Natural killer cell (primary cell): ENCODE measurements at regions of chr17 and their contacts with region 1.

Region 1: GRCh38 chr17:18855831-18856569 is 1.9 kb upstream of the PRPSAP2 start:
- DNase-seq: peak; percentile 83 to 94
- ATAC-seq: peak; percentile 84 to 91 (median 87)
- H3K4me3 ChIP-seq: peak overlapping the region; percentile 71
- H3K4me3 Mint-ChIP-seq: peak overlapping the region; percentile 98
- H3K27ac ChIP-seq: peak overlapping the region; percentile 72
- H3K27ac Mint-ChIP-seq: peak overlapping the region; percentile 96 to 97
- H3K4me1 ChIP-seq: peaks cover 28% of the 10 kb centered on the region
- H3K4me1 Mint-ChIP-seq: peaks cover 36 to 37% of the 10 kb centered on the region in 2 donors
- H3K27me3 ChIP-seq: no peaks in the 10 kb centered on the region
- H3K27me3 Mint-ChIP-seq: no peaks in the 10 kb centered on the region
- CTCF ChIP-seq: no peak

Region 2: GRCh38 chr17:18896146-18896545 is 40.1 kb after region 1 on chr17:
- intact Hi-C with region 1: loop called (anchors 2 kb)
- DNase-seq: no peak
- ATAC-seq: no peak
- H3K4me3 ChIP-seq: no peak overlapping the region
- H3K4me3 Mint-ChIP-seq: no peak overlapping the region
- H3K27ac ChIP-seq: no peak overlapping the region
- H3K27ac Mint-ChIP-seq: no peak overlapping the region
- H3K4me1 ChIP-seq: peaks cover 18% of the 10 kb centered on the region
- H3K4me1 Mint-ChIP-seq: peaks cover 17 to 19% of the 10 kb centered on the region in 2 donors
- H3K27me3 ChIP-seq: no peaks in the 10 kb centered on the region
- H3K27me3 Mint-ChIP-seq: peaks cover 0 to 8% of the 10 kb centered on the region in 2 donors
- CTCF ChIP-seq: no peak

Region 3: DNA sequence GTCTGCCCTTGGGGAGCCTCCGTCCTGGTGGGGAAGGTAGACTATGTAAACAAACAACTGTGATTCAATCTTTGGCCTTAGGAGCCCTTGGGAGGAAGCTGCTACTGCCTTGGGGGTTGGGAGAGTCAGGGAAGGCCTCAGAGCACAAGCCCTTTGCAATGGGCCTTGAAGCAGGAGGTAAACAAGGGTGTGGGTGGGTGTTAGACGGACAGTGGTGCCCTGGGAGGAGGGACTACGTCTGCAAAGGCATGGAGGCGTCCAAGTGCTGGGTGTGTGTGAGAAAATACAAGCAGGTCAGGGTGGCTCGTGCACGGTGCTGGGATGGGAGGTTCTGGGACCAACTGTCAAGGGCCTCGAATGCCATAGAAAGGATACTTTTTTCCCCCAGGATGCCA is 155.1 kb after region 1 on chr17:
- intact Hi-C with region 1: no loop called
- DNase-seq: no peak
- ATAC-seq: no peak
- H3K4me3 ChIP-seq: no peak overlapping the region
- H3K4me3 Mint-ChIP-seq: no peak overlapping the region
- H3K27ac ChIP-seq: no peak overlapping the region
- H3K27ac Mint-ChIP-seq: no peak overlapping the region
- H3K4me1 ChIP-seq: no peaks in the 10 kb centered on the region
- H3K4me1 Mint-ChIP-seq: no peaks in the 10 kb centered on the region
- H3K27me3 ChIP-seq: no peaks in the 10 kb centered on the region
- H3K27me3 Mint-ChIP-seq: peaks cover 0 to 11% of the 10 kb centered on the region in 2 donors
- CTCF ChIP-seq: no peak